H1 (cell line): ENCODE measurements at regions of chr5 and their contacts with region 1.

Region 1: DNA sequence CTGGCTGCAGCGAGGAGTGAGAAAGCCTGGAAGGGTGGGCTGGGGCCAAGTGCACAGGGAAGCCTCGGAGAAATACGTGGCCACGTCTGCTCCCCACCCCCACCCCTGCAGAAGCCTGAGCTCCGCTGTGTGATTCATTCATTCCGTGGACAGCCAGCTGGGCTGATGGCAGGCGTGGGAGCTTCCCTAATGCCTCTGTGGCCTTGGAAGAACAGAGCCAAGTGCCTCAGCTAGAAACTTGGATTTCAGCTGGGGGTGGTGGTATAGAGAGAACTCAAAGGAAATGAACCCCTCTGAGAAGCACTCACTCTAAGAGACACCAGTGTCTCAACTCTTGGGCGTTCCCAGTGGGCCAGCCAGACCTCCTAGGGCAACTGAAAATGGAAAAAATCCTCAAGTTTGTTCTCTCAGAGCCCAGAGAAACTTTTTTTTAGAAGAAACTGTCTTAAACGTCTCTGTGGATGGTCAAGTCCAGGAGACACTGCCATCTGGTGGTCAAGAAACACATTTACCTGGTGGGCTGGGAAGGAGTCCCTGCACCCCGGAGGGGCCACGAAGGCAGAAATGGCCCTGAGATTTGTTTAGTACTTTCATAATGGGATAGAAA is 18.0 kb downstream of the ATOX1 start:
- DNase-seq: peak in 1 of 2 experiments; percentile 77
- H3K4me3 ChIP-seq: peak overlapping the region in 2 of 4 experiments; percentile 5 to 22; a peak in 4 of 8 replicates
- H3K27ac ChIP-seq: peak overlapping the region; percentile 70; the same call in 1 of the 2 replicates
- H3K4me1 ChIP-seq: peaks cover 6 to 10% (median 9%) of the 10 kb centered on the region in 4 experiments
- H3K27me3 ChIP-seq: no peaks in the 10 kb centered on the region
- CTCF ChIP-seq: peak; percentile 75 to 79 (median 76)
- EP300 ChIP-seq: no peak
- POLR2A ChIP-seq: 0 out of 3 replicates have a peak, but pooled peaks of 1 of the 2 experiments have one; percentile 48
- RAD21 ChIP-seq: peak; percentile 79 to 81

Region 2: GRCh38 chr5:151523335-151523734 is 217.1 kb before region 1 on chr5:
- CTCF ChIA-PET with region 1: interaction called, 31 read pairs
- POLR2A ChIA-PET with region 1: no interaction called
- DNase-seq: peak; percentile 15 to 69
- H3K4me3 ChIP-seq: no peak overlapping the region
- H3K27ac ChIP-seq: no peak overlapping the region
- H3K4me1 ChIP-seq: no peaks in the 10 kb centered on the region
- H3K27me3 ChIP-seq: no peaks in the 10 kb centered on the region
- CTCF ChIP-seq: peak; percentile 62 to 94 (median 89)
- EP300 ChIP-seq: no peak
- POLR2A ChIP-seq: no peak
- RAD21 ChIP-seq: peak; percentile 95 to 97

Region 3: DNA sequence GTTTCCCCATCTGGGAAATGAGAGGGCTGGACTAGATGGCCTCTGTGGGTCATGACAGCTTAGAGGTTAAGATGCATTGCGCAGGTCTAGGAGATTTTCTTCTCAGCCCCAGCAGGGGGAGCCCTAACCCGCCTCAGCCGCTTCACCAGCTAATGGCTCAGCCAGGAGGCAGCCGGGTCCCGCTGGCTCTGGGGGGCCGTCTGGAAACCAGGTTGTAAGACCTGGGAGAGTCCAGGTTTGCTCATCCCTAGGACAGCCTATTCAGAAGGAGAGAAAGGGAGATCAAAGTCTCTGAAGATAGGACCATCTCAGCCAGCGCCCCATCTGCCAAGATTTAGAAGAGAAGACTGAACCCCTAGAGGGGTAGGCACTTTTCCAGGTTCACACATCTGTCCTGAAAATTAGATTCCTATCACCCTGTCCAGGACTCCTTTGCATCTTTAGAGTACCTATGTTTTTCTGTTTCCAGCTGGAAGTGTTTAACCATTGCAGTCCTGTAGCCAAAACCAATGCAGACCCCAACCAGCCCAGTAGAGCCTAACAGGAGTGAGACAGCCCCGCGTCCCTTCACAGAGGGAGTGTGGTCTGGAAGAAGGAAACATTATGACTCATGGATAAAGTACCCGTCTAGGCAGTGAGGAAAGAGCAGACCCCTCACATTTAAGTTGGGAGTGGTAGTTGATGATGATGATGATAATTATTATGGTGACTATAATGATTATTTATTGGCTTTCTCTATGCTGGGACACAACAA is 81.3 kb before region 1 on chr5:
- CTCF ChIA-PET with region 1: interaction called, 991 read pairs
- POLR2A ChIA-PET with region 1: interaction called, 15 read pairs
- DNase-seq: peak; percentile 77 to 96
- H3K4me3 ChIP-seq: no peak overlapping the region
- H3K27ac ChIP-seq: no peak overlapping the region
- H3K4me1 ChIP-seq: peaks cover 0 to 5% (median 0%) of the 10 kb centered on the region in 4 experiments; a peak in 1 of 7 replicates
- H3K27me3 ChIP-seq: no peaks in the 10 kb centered on the region
- CTCF ChIP-seq: peak; percentile 76 to 98 (median 87)
- EP300 ChIP-seq: no peak
- POLR2A ChIP-seq: no peak
- RAD21 ChIP-seq: peak; percentile 92 to 99

Region 4: DNA sequence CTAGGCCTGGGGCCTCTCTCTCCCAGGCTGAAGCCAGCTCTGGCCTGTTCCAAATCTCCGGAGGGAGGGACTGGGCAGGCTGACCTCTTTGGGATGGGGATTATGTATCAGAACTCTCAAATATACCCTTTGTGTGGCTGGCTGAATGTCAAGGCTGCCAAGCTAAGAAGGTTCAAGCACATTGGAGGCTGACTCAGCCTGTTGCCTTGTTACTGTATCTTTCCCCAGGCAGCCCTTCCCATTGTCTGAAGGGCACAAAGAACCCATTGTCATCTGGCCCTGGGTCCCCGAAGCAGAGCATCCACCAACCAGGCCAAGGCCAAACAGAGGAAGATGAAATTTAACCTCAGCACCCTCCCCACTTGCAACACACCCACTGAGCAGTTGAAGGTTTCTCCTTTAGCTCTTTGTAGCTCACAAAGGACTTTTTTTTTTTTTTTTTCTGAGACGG is 46.4 kb before region 1 on chr5:
- CTCF ChIA-PET with region 1: interaction called, 25 read pairs
- POLR2A ChIA-PET with region 1: interaction called, 14 read pairs
- DNase-seq: no peak
- H3K4me3 ChIP-seq: no peak overlapping the region
- H3K27ac ChIP-seq: no peak overlapping the region
- H3K4me1 ChIP-seq: peaks cover 3 to 11% (median 6%) of the 10 kb centered on the region in 4 experiments
- H3K27me3 ChIP-seq: no peaks in the 10 kb centered on the region
- CTCF ChIP-seq: no peak
- EP300 ChIP-seq: no peak
- POLR2A ChIP-seq: no peak
- RAD21 ChIP-seq: no peak

Region 5: DNA sequence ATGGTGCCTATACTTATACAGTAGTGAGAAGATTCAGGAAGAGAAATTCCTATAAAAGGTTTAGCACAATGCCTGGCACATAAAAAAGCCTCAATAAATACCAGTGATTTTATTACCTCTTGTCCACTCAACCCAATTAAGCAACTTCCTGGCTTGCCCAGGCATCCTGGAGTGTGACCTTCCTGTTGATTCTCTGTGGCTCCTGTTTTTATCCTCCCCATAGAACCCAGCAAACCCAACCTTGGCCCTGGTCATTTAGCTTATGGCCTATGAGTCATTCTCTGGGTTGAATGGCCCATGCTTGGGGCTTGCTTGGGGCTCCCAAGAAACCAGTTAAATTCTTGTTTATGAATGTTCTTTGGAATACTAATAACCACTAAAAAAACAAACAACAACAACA is 32.3 kb before region 1 on chr5:
- CTCF ChIA-PET with region 1: interaction called, 48 read pairs
- POLR2A ChIA-PET with region 1: no interaction called
- DNase-seq: no peak
- H3K4me3 ChIP-seq: no peak overlapping the region
- H3K27ac ChIP-seq: no peak overlapping the region
- H3K4me1 ChIP-seq: no peaks in the 10 kb centered on the region
- H3K27me3 ChIP-seq: peaks cover 0 to 1% (median 0%) of the 10 kb centered on the region in 4 experiments; a peak in 1 of 7 replicates
- CTCF ChIP-seq: no peak
- EP300 ChIP-seq: no peak
- POLR2A ChIP-seq: no peak
- RAD21 ChIP-seq: no peak

Region 6: GRCh38 chr5:151751091-151751490 is 10.7 kb after region 1 on chr5:
- CTCF ChIA-PET with region 1: interaction called, 53 read pairs
- POLR2A ChIA-PET with region 1: interaction called, 6 read pairs
- DNase-seq: no peak
- H3K4me3 ChIP-seq: no peak overlapping the region
- H3K27ac ChIP-seq: no peak overlapping the region
- H3K4me1 ChIP-seq: peaks cover 0 to 4% (median 2%) of the 10 kb centered on the region in 4 experiments; a peak in 2 of 7 replicates
- H3K27me3 ChIP-seq: no peaks in the 10 kb centered on the region
- CTCF ChIP-seq: no peak
- EP300 ChIP-seq: no peak
- POLR2A ChIP-seq: no peak
- RAD21 ChIP-seq: no peak

Region 7: DNA sequence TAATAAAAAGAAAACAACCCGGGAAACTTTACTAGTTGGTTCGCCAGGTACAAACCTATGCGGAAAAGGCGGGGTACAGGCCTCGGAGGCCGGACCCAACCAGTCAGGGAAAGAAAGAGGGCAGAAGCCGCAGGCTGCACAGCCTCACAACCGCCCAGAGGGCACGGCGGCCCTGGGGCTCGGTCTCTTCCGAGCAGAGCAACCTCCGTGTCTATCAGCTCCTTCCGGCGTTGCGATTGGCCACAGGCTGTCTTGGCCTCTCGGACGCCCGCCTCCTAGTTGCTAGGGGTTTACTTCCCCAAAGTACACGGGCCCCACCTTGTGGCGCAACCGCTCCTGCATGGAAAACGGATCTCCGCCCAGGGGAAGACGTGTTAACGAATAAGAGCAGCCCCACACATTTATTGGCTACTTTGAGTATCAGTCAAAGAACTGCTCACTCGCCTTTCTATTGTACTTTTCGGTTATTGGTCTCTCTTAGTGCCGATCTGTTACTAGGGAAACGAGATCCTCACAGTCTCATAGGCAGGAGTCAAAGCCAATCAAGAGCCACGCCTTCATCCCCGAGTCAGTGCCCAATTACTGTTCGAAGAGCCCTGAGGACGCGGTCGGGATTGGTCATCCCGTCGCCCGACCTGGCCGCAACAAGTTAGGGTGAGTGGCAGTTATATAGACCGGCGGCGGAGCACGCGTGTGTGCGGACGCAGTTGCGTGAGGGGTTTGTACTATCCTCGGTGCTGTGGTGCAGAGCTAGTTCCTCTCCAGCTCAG is 31.0 kb after region 1 on chr5 and contains the start of gene G3BP1:
- CTCF ChIA-PET with region 1: interaction called, 4 read pairs
- POLR2A ChIA-PET with region 1: interaction called, 33 read pairs
- DNase-seq: peak; percentile 98 to 100
- H3K4me3 ChIP-seq: peak within 1 kb of the TSS; percentile 79 to 99 (median 98)
- H3K27ac ChIP-seq: peak within 1 kb of the TSS; percentile 90
- H3K4me1 ChIP-seq: peaks cover 1 to 11% (median 5%) of the 10 kb centered on the region in 4 experiments; a peak in 5 of 7 replicates
- H3K27me3 ChIP-seq: no peaks in the 10 kb centered on the region
- CTCF ChIP-seq: peak; percentile 23 to 68 (median 27); a peak in 3 of 4 replicates
- EP300 ChIP-seq: no peak
- POLR2A ChIP-seq: peak; percentile 94 to 98
- RAD21 ChIP-seq: peak; percentile 56 to 57
- total RNA-seq, gene G3BP1: 516 and 529 TPM in 2 replicates

Region 8: GRCh38 chr5:151880324-151880723 is 139.9 kb after region 1 on chr5:
- CTCF ChIA-PET with region 1: no interaction called
- POLR2A ChIA-PET with region 1: no interaction called
- DNase-seq: no peak
- H3K4me3 ChIP-seq: no peak overlapping the region
- H3K27ac ChIP-seq: no peak overlapping the region
- H3K4me1 ChIP-seq: no peaks in the 10 kb centered on the region
- H3K27me3 ChIP-seq: peaks cover 3 to 17% (median 5%) of the 10 kb centered on the region in 4 experiments; a peak in 5 of 7 replicates
- CTCF ChIP-seq: no peak
- EP300 ChIP-seq: no peak
- POLR2A ChIP-seq: no peak
- RAD21 ChIP-seq: no peak